ENCODE measurements at regions of chr14 and their contacts with region 1.

Region 1: DNA sequence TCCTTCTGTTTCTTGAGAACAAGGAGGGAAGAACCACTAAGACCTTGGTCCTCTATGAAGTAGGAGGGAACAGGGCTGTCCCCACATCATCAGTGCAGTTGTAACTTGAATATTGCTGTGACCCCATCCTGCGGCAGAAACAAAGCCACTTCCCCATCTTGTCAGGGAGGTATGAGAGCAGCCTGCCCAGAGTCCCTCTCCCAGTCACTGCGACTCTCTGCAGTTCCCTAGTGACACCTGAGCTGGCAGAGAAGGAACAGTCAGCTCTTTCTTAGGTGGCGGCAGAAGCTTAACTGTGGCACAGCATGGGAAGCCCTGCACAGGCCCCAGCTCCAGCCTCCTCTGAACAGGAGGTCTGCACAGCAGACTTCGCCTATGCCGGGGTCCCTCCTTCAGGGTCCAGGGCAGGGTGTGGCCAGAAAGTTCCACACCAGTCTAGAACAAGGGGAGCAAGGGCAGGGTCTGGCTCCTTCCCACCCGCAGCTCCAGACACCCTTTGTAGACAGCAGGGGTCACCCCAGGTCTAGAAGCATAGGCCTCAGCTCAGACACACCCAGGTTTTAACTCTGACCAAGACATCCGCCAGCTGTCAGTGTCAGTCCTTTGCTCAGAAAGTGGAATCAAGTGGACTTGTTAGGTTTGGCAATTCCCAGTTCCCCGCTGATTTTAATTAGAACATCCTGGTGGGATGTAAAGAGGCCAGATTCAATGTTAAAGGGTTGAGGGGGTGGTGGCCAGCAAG is 36.8 kb downstream of the DEGS2 start:
- DNase-seq: no peak
- H3K4me3 ChIP-seq: no peak overlapping the region
- H3K27ac ChIP-seq: no peak overlapping the region
- H3K4me1 ChIP-seq: no peaks in the 10 kb centered on the region
- H3K27me3 ChIP-seq: no peaks in the 10 kb centered on the region
- CTCF ChIP-seq: no peak
- EP300 ChIP-seq: no peak
- POLR2A ChIP-seq: no peak
- RAD21 ChIP-seq: peak in 1 of 2 experiments; percentile 23; a peak in 1 of 4 replicates

Region 2: GRCh38 chr14:100140452-100141078 is 17.9 kb after region 1 on chr14:
- CTCF ChIA-PET with region 1: interaction called, 307 read pairs
- POLR2A ChIA-PET with region 1: no interaction called
- DNase-seq: peak; percentile 58 to 78
- H3K4me3 ChIP-seq: no peak overlapping the region
- H3K27ac ChIP-seq: no peak overlapping the region; the same call in 1 of the 2 replicates
- H3K4me1 ChIP-seq: peaks cover 0 to 6% (median 5%) of the 10 kb centered on the region in 4 experiments; a peak in 5 of 7 replicates
- H3K27me3 ChIP-seq: no peaks in the 10 kb centered on the region; a peak in 1 of 7 replicates
- CTCF ChIP-seq: peak in 2 of 3 experiments; percentile 73 to 78; a peak in 3 of 4 replicates
- EP300 ChIP-seq: no peak
- POLR2A ChIP-seq: no peak
- RAD21 ChIP-seq: peak; percentile 56 to 70